Activated T-helper 1 cell treated with anti-CD3 and anti-CD28 coated beads, Interleukin-12 subunit alpha, Interleukin-12 subunit beta, Interleukin-2, Interleukin-4 antibody, amounts not matched to agents 30 ng/mL and 10 ng/mL and 1 ng/mL, durations not matched to agents 14 hours and 24 hours and 36 hours (primary cell): ENCODE measurements at regions of chr7 and their contacts with region 1.

Region 1: GRCh38 chr7:149284850-149285626 is 23.0 kb downstream of the ZNF783 start:
- DNase-seq: peak; percentile 98
- H3K4me3 Mint-ChIP-seq: peak overlapping the region; percentile 94
- H3K27ac Mint-ChIP-seq: peak overlapping the region; percentile 52
- H3K4me1 Mint-ChIP-seq: peaks cover 33% of the 10 kb centered on the region
- H3K27me3 Mint-ChIP-seq: no peaks in the 10 kb centered on the region

Region 2: GRCh38 chr7:148940702-148941597 is 344.1 kb before region 1 on chr7:
- intact Hi-C with region 1: no loop called
- DNase-seq: peak; percentile 65
- H3K4me3 Mint-ChIP-seq: peak overlapping the region; percentile 96
- H3K27ac Mint-ChIP-seq: peak overlapping the region; percentile 98
- H3K4me1 Mint-ChIP-seq: peaks cover 31% of the 10 kb centered on the region
- H3K27me3 Mint-ChIP-seq: no peaks in the 10 kb centered on the region

Region 3: DNA sequence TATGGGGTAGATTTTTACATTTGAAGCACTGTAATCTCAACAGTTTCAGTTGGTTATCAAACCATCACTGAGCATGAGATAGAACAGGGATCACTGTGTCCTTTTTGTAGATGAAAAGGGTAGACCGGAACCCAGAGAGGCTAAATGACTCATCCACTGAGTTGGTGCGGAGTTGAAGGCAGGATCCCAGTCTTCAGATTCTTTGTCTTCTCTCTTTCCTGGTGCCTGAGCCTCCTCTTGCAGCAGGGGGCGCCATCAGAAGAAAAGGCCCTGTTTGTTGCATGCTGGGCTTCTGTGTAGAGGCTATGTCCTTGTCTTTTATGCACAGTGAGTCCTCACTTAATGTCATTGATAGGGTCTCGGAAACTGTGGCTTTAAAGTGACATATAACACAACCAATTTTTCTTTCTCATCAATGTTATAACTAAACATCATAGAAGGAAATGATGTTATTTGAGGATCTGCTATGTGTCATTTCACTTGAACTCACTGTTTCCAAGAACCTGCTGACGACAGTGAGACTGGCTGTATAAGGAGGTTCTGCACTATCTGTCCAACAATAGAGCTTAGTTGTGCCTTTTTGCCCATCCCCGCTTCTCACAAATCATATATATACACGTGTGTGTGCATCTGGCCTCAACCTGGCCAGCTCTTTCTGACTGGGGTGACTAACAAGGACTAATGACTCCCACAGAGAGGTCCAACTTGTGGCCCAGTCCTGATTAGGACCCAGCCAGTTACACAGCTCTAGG is 75.3 kb before region 1 on chr7:
- intact Hi-C with region 1: loop called (anchors 1 kb)
- DNase-seq: peak; percentile 65
- H3K4me3 Mint-ChIP-seq: peak overlapping the region; percentile 37
- H3K27ac Mint-ChIP-seq: peak overlapping the region; percentile 87
- H3K4me1 Mint-ChIP-seq: peaks cover 13% of the 10 kb centered on the region
- H3K27me3 Mint-ChIP-seq: no peaks in the 10 kb centered on the region

Region 4: GRCh38 chr7:149239345-149240191 is 45.5 kb before region 1 on chr7 and contains the start of gene ZNF212:
- intact Hi-C with region 1: loop called (anchors 1 kb)
- DNase-seq: peak; percentile 84
- H3K4me3 Mint-ChIP-seq: peak within 1 kb of the TSS; percentile 92
- H3K27ac Mint-ChIP-seq: peak within 1 kb of the TSS; percentile 81
- H3K4me1 Mint-ChIP-seq: peaks cover 27% of the 10 kb centered on the region
- H3K27me3 Mint-ChIP-seq: no peaks in the 10 kb centered on the region
- total RNA-seq, gene ZNF212: 15.0 and 17.8 TPM in 2 replicates

Region 5: DNA sequence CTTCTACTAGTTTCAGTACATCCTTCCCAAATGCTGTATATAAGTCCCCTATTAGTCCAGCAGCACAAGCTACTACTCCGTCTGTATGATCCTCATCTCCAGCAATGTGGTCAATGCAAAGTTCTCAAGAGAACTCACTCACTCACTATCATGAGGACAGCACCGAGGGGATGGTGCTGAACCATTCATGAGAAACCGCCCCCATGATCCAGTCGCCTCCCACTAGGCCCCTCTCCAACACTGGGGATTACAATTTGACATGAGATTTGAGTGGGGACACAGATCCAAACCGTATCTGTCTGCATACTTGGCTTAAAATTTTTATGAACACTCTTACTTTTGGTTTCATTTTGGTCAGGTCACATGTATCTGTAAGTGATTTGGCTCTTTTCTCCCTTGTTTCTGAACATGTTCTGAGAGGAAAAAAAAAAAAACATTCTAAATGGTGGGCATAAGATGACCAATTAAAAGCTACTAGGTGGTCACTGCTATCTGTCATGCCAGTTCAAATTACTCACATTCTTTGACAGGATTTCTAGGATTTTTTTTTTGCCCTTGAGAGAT is 37.0 kb after region 1 on chr7:
- intact Hi-C with region 1: loop called (anchors 1 kb)
- DNase-seq: no peak
- H3K4me3 Mint-ChIP-seq: peak overlapping the region; percentile 47
- H3K27ac Mint-ChIP-seq: peak overlapping the region; percentile 62
- H3K4me1 Mint-ChIP-seq: peaks cover 28% of the 10 kb centered on the region
- H3K27me3 Mint-ChIP-seq: peaks cover 2% of the 10 kb centered on the region

Region 6: GRCh38 chr7:149355390-149356048 is 70.5 kb after region 1 on chr7:
- intact Hi-C with region 1: no loop called
- DNase-seq: no peak
- H3K4me3 Mint-ChIP-seq: no peak overlapping the region
- H3K27ac Mint-ChIP-seq: no peak overlapping the region
- H3K4me1 Mint-ChIP-seq: no peaks in the 10 kb centered on the region
- H3K27me3 Mint-ChIP-seq: no peaks in the 10 kb centered on the region

Region 7: DNA sequence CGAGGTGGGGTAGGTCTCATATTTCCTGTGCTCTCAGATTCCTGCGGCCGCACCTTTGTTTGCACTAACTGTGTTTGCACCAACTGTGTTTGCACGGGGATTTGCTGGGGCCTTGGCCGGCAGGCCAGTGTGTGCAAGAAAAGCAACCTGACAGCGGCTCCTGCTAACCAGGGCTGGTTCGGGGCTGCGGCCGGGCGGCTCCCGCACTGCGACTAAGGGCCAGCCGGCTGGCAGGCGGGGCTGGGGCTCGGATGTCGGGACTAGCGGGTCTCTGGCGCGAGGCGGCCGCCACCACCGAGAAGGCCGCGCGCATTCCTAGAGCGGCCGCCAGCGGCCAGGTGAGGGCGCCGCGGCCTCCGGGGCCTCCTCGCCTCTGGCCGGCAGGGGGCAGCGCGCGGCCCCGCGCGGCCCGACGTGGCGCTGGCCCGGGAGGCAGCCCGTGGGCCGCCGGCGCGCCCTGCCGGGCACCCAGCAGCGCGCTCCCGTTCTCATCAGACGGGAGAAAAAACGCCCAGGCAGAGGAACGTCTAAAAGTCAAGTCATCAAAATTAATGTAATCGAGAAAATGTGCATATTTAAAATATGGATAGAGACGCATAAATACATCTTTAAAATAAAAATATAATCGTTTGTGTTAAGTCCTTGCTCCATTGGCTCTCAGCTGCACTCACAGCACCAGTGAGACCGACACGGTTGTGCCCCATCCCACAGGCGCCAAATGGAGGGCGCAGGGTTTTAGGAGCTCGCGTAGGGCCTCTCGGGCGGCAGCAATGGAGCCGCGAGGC is 137.3 kb after region 1 on chr7:
- intact Hi-C with region 1: loop called (anchors 1 kb)
- DNase-seq: peak; percentile 73
- H3K4me3 Mint-ChIP-seq: peak overlapping the region; percentile 66
- H3K27ac Mint-ChIP-seq: peak overlapping the region; percentile 61
- H3K4me1 Mint-ChIP-seq: no peaks in the 10 kb centered on the region
- H3K27me3 Mint-ChIP-seq: peaks cover 4% of the 10 kb centered on the region